ENCODE measurements at regions of chr19 and their contacts with region 1.

Region 1: GRCh38 chr19:10717356-10718204 is at the start of gene DNM2:
- DNase-seq: peak; percentile 100
- ATAC-seq: peak; percentile 93
- H3K4me3 ChIP-seq: peak within 1 kb of the TSS; percentile 81
- H3K27ac ChIP-seq: peak within 1 kb of the TSS; percentile 92
- H3K4me1 ChIP-seq: peaks cover 11% of the 10 kb centered on the region
- H3K27me3 ChIP-seq: no peaks in the 10 kb centered on the region
- CTCF ChIP-seq: peak; percentile 69 to 96 (median 89)
- EP300 ChIP-seq: no peak
- POLR2A ChIP-seq: peak; percentile 94
- RAD21 ChIP-seq: peak; percentile 79
- polyA plus RNA-seq, gene DNM2: 1.2 to 3.4 TPM

Region 2: DNA sequence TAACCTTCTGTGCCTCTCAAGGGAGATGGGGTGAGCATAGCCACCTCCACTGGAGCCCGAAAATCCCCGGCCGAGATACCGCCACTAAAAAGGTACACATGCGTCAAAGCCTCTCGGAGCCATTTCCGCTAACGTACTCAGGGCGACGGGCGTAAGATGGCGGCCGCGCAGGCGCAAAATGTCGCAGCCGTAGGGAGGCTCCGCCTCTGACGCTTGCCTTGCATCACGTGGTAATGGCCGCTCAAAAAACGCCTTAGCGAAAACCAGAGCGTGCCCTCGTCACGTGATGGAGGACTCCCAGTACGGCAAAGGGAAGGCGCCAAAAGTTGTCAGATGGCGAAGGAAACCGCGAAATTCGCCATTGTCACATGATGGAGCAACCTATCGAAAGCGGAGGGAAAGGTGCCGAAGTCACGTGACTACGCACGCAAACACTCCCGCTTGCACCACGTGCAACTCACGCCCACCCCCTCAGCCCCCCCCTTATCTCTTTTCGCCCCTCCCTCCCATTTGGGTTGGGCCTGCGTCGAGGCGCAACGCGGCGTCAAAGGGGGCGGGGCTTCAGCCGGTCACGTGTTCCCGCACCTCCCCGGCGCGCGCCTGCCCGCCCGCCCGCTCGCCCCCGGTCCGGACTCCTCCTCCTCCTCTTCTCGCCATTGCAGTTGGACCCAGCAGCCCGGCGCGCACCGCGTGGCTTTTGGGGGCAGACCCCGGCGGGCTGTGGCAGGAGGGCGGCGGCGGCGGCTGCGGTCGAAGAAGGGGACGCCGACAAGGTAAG is 63.7 kb before region 1 on chr19 and contains the start of gene ILF3:
- CTCF ChIA-PET with region 1: no interaction called
- POLR2A ChIA-PET with region 1: no interaction called
- RAD21 ChIA-PET with region 1: no interaction called
- SMC1A ChIA-PET with region 1: no interaction called
- in situ Hi-C with region 1: no loop called
- intact Hi-C with region 1: no loop called
- DNase-seq: peak; percentile 100
- ATAC-seq: peak; percentile 83
- H3K4me3 ChIP-seq: peak within 1 kb of the TSS; percentile 91
- H3K27ac ChIP-seq: peak within 1 kb of the TSS; percentile 99
- H3K4me1 ChIP-seq: peaks cover 6% of the 10 kb centered on the region
- H3K27me3 ChIP-seq: no peaks in the 10 kb centered on the region
- CTCF ChIP-seq: no peak
- EP300 ChIP-seq: peak; percentile 52 to 54
- POLR2A ChIP-seq: peak; percentile 89
- RAD21 ChIP-seq: no peak
- polyA plus RNA-seq, gene ILF3: 28.1 to 38.1 TPM

Region 3: GRCh38 chr19:10730923-10731322 is 13.3 kb after region 1 on chr19:
- CTCF ChIA-PET with region 1: interaction called, 9 read pairs
- POLR2A ChIA-PET with region 1: interaction called, 3 read pairs
- RAD21 ChIA-PET with region 1: interaction called, 8 read pairs
- SMC1A ChIA-PET with region 1: interaction called, 10 read pairs
- in situ Hi-C with region 1: no loop called
- intact Hi-C with region 1: no loop called
- DNase-seq: no peak
- ATAC-seq: peak; percentile 62
- H3K4me3 ChIP-seq: peak overlapping the region; percentile 0; the same call in 1 of the 2 replicates
- H3K27ac ChIP-seq: peak overlapping the region; percentile 64
- H3K4me1 ChIP-seq: peaks cover 20% of the 10 kb centered on the region
- H3K27me3 ChIP-seq: no peaks in the 10 kb centered on the region
- CTCF ChIP-seq: no peak
- EP300 ChIP-seq: no peak
- POLR2A ChIP-seq: 0 out of 2 replicates have a peak, but pooled peaks have one; percentile 25
- RAD21 ChIP-seq: no peak

Region 4: DNA sequence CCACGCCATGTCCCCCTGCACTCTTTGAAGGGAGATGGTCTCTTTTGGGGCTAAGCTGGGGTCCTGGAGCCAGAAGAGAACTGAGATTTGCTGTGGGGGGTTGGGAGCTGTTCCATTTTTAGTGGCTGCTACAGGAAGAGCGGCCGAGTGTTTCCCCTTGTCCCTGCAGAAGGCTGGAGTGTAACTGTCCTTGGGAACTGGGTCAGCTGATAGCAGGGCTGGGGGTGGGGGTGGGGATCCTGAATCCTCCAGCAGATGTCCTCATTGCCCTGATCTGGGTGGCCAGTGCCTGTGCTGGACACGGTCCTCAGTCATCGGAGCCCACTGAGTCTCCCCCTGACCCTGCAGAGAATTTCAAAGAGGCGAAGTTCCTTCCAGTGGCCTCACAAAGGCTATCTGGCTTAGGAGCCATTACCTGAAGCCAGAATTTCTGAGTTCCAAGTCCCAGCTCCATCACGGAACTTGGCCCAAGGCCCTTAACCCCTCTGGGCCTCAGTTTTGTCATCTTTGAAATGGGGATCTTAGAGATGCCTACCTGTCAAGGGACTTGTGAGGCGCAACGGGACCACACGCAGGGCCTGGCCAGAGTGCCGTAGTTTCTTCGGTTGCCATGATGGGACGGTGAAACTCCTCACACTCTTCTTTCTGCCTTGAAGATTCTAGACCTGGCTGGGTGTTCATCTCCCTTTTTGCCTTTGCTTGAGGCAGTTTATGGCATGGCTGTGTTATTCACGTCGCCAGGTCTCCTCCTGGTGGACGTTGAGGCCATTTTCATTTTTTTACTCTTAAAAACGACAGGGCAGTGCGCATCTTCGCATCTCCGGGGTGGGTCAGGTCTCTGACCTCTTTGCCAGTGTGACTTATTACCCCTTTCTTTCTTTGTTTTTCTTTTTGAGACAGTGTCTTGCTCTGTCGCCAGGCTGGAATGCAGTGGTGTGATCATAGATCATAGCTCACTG is 52.2 kb after region 1 on chr19:
- CTCF ChIA-PET with region 1: interaction called, 13 read pairs
- POLR2A ChIA-PET with region 1: interaction called, 7 read pairs
- RAD21 ChIA-PET with region 1: interaction called, 4 read pairs
- SMC1A ChIA-PET with region 1: interaction called, 4 read pairs
- in situ Hi-C with region 1: no loop called
- intact Hi-C with region 1: loop called (anchors 5 kb)
- DNase-seq: no peak
- ATAC-seq: no peak
- H3K4me3 ChIP-seq: no peak overlapping the region
- H3K27ac ChIP-seq: no peak overlapping the region
- H3K4me1 ChIP-seq: peaks cover 5% of the 10 kb centered on the region
- H3K27me3 ChIP-seq: no peaks in the 10 kb centered on the region
- CTCF ChIP-seq: peak in 1 of 3 experiments; percentile 10; a peak in 1 of 6 replicates
- EP300 ChIP-seq: no peak
- POLR2A ChIP-seq: no peak
- RAD21 ChIP-seq: peak; percentile 15; the same call in 1 of the 2 replicates

Region 5: GRCh38 chr19:10820173-10820572 is 102.6 kb after region 1 on chr19:
- CTCF ChIA-PET with region 1: interaction called, 37 read pairs
- POLR2A ChIA-PET with region 1: no interaction called
- RAD21 ChIA-PET with region 1: interaction called, 16 read pairs
- SMC1A ChIA-PET with region 1: interaction called, 10 read pairs
- in situ Hi-C with region 1: no loop called
- intact Hi-C with region 1: loop called (anchors 1 kb)
- DNase-seq: no peak
- ATAC-seq: peak; percentile 63
- H3K4me3 ChIP-seq: no peak overlapping the region
- H3K27ac ChIP-seq: no peak overlapping the region
- H3K4me1 ChIP-seq: no peaks in the 10 kb centered on the region
- H3K27me3 ChIP-seq: no peaks in the 10 kb centered on the region
- CTCF ChIP-seq: peak; percentile 25 to 43 (median 34); a peak in 3 of 6 replicates
- EP300 ChIP-seq: no peak
- POLR2A ChIP-seq: no peak
- RAD21 ChIP-seq: peak; percentile 26; the same call in 1 of the 2 replicates

Region 6: DNA sequence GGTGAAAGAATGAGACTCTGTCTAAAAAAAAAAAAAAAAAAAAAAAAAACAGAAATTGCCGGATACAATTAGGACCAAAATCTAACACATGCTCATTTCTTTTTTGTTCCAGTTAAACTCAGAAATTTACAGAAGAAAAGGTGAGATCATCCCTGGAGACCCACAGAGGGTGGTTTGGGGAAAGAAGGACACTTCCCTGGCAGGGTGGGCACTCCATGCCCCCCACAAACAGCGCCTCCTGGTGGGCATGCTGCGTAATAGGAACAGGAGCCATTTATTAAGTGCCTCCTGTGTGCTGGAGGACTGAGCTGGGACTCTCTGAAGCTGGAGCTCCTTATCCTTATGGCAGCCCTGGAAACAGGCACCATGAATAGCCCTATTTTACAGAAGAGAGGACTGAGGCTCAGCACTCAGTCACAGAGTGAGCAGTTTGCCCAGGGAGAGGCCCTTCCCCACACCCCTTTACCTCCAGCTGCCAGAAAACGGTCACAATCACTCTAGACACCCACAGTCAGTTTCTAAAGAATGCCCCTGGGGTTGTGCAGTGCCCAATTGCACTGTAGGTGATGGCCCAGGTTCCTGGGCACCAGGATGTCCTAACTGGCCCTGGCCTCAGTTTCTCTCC is 140.7 kb after region 1 on chr19:
- CTCF ChIA-PET with region 1: interaction called, 211 read pairs
- POLR2A ChIA-PET with region 1: interaction called, 34 read pairs
- RAD21 ChIA-PET with region 1: interaction called, 102 read pairs
- SMC1A ChIA-PET with region 1: interaction called, 102 read pairs
- in situ Hi-C with region 1: loop called (anchors 5 kb)
- intact Hi-C with region 1: no loop called
- DNase-seq: no peak
- ATAC-seq: peak; percentile 73
- H3K4me3 ChIP-seq: no peak overlapping the region
- H3K27ac ChIP-seq: no peak overlapping the region
- H3K4me1 ChIP-seq: no peaks in the 10 kb centered on the region; the same call in 1 of the 2 replicates
- H3K27me3 ChIP-seq: no peaks in the 10 kb centered on the region
- CTCF ChIP-seq: peak; percentile 65 to 91 (median 80)
- EP300 ChIP-seq: no peak
- POLR2A ChIP-seq: no peak
- RAD21 ChIP-seq: peak; percentile 49; the same call in 1 of the 2 replicates

Region 7: GRCh38 chr19:10960314-10961072 is 242.9 kb after region 1 on chr19 and contains the start of gene SMARCA4:
- CTCF ChIA-PET with region 1: no interaction called
- POLR2A ChIA-PET with region 1: no interaction called
- RAD21 ChIA-PET with region 1: no interaction called
- SMC1A ChIA-PET with region 1: no interaction called
- in situ Hi-C with region 1: no loop called
- intact Hi-C with region 1: loop called (anchors 5 kb)
- DNase-seq: peak; percentile 83
- ATAC-seq: peak; percentile 77
- H3K4me3 ChIP-seq: peak within 1 kb of the TSS; percentile 98
- H3K27ac ChIP-seq: peak within 1 kb of the TSS; percentile 77
- H3K4me1 ChIP-seq: peaks cover 17% of the 10 kb centered on the region; the same call in 1 of the 2 replicates
- H3K27me3 ChIP-seq: no peaks in the 10 kb centered on the region
- CTCF ChIP-seq: no peak
- EP300 ChIP-seq: no peak
- POLR2A ChIP-seq: peak; percentile 97
- RAD21 ChIP-seq: no peak
- polyA plus RNA-seq, gene SMARCA4: 22.4 to 43.8 TPM

Measured in GM12878 (cell line).